ENCODE measurements at regions of chr3 and their contacts with region 1.

Region 1: GRCh38 chr3:107421170-107421792 is 44.0 kb downstream of the CCDC54 start:
- DNase-seq: peak; percentile 25
- H3K4me3 ChIP-seq: no peak overlapping the region
- H3K27ac ChIP-seq: peak overlapping the region in 1 of 2 donors; percentile 45
- H3K4me1 ChIP-seq: no peaks in the 10 kb centered on the region
- H3K27me3 ChIP-seq: no peaks in the 10 kb centered on the region
- CTCF ChIP-seq: peak in 3 of 4 experiments; percentile 66 to 75 (median 70)
- POLR2A ChIP-seq: no peak

Region 2: GRCh38 chr3:107271787-107272387 is 149.4 kb before region 1 on chr3:
- intact Hi-C with region 1: loop called (anchors 2 kb)
- DNase-seq: no peak
- H3K4me3 ChIP-seq: no peak overlapping the region
- H3K27ac ChIP-seq: no peak overlapping the region
- H3K4me1 ChIP-seq: no peaks in the 10 kb centered on the region
- H3K27me3 ChIP-seq: no peaks in the 10 kb centered on the region
- CTCF ChIP-seq: peak; percentile 45 to 72 (median 66)
- POLR2A ChIP-seq: no peak

Region 3: GRCh38 chr3:107729686-107730085 is 308.4 kb after region 1 on chr3:
- intact Hi-C with region 1: no loop called
- DNase-seq: no peak
- H3K4me3 ChIP-seq: no peak overlapping the region
- H3K27ac ChIP-seq: no peak overlapping the region
- H3K4me1 ChIP-seq: no peaks in the 10 kb centered on the region
- H3K27me3 ChIP-seq: no peaks in the 10 kb centered on the region
- CTCF ChIP-seq: no peak
- POLR2A ChIP-seq: no peak

Region 4: DNA sequence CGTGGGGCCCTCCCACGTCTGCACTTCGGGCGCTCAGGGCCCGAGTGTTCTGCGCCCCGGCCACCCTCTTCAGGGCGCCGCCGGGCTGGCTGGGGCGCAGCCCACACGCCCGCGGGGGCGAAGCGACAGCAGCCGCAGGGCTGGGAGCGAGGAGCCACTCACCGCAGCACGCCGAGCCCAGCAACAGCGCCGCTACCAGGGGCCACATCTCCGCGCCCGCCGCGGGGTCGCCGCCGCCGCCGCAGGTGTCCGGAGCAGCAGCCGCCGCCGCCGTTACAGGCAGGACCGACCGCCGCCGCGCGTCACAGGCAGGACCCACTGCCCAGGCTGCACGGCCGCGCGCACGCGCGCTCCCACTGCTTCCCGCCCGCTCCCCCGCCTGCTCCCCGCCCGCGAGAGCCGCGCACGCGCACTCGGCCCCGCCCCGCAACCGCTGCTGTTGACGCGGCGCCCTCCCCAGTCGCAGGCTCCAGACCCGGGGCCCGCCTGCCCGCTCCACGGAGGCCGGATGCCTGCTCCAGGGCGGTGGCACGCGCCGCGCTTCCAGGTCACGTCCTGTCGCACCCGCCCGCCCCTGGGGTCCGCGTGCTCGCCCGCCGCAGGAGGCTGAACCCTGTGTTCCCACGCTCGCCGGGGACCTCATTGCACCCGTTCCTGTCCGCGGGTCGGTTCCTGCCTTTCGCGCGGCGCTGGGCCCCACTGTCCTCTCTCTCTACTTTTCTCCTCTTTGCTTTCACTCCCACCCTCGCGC is 669.6 kb after region 1 on chr3 and contains the start of gene CD47:
- intact Hi-C with region 1: no loop called
- DNase-seq: peak; percentile 95
- H3K4me3 ChIP-seq: peak within 1 kb of the TSS; percentile 97 to 99
- H3K27ac ChIP-seq: peak within 1 kb of the TSS; percentile 91 to 95
- H3K4me1 ChIP-seq: no peaks in the 10 kb centered on the region
- H3K27me3 ChIP-seq: no peaks in the 10 kb centered on the region
- CTCF ChIP-seq: no peak
- POLR2A ChIP-seq: peak; percentile 92
- total RNA-seq, gene CD47: 90.1 to 197 TPM

Measured in prostate gland (tissue), 2 donors.